ENCODE measurements at regions of chr1 and their contacts with region 1.

Region 1: DNA sequence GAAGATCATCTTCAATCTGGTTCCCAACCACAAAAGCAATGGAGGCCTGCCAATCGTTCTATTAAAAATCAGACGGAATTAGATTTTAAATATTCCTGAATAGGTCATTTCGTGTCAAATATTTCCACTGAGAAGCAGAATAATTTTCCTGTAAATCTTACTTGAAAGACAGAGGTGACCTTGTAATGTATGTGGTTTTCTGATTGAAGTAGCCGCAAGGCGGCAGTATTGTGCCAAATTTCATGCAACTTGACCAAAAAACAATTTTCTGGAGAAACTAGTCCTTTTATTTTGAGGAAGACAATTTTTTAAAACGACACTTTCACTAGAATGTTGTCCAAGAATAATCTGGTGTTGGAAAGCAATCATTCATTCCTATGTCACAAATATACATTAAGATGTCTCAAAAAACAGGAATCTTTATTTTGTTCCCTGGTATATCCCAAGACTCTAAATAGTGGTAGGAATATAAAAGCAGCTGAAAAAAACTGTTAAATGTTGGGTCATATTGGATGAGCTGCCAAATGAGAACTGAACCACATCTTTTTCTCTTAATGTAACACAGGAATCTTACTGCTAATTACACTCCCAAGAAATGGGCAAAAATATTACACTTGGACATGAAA is 33.6 kb downstream of the SPAG17 start:
- DNase-seq: no peak
- H3K4me3 ChIP-seq: no peak overlapping the region
- H3K27ac ChIP-seq: no peak overlapping the region
- H3K4me1 ChIP-seq: no peaks in the 10 kb centered on the region
- H3K27me3 ChIP-seq: no peaks in the 10 kb centered on the region
- CTCF ChIP-seq: peak; percentile 54 to 68 (median 67)
- EP300 ChIP-seq: no peak
- POLR2A ChIP-seq: no peak

Region 2: DNA sequence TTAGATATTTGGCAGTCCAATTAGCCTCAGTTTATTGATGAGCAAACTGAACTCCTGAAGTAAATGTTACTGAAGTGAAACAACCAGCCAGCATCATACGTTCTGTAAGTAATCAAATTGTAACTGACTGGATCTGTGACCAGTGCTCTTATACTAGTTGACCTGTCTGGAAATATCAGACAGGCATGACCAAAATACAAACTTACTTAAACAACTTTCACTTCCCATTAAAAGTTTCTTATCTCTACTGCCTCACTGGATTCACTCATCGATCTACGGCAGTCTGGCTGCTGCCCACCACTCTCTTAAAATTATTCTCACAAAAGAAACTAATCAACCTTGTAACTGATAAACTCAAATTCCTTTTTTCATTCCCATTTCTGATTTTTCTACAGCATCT is 165.5 kb before region 1 on chr1:
- intact Hi-C with region 1: no loop called
- DNase-seq: no peak
- H3K4me3 ChIP-seq: no peak overlapping the region
- H3K27ac ChIP-seq: no peak overlapping the region
- H3K4me1 ChIP-seq: no peaks in the 10 kb centered on the region
- H3K27me3 ChIP-seq: no peaks in the 10 kb centered on the region
- CTCF ChIP-seq: no peak
- EP300 ChIP-seq: no peak
- POLR2A ChIP-seq: no peak

Region 3: DNA sequence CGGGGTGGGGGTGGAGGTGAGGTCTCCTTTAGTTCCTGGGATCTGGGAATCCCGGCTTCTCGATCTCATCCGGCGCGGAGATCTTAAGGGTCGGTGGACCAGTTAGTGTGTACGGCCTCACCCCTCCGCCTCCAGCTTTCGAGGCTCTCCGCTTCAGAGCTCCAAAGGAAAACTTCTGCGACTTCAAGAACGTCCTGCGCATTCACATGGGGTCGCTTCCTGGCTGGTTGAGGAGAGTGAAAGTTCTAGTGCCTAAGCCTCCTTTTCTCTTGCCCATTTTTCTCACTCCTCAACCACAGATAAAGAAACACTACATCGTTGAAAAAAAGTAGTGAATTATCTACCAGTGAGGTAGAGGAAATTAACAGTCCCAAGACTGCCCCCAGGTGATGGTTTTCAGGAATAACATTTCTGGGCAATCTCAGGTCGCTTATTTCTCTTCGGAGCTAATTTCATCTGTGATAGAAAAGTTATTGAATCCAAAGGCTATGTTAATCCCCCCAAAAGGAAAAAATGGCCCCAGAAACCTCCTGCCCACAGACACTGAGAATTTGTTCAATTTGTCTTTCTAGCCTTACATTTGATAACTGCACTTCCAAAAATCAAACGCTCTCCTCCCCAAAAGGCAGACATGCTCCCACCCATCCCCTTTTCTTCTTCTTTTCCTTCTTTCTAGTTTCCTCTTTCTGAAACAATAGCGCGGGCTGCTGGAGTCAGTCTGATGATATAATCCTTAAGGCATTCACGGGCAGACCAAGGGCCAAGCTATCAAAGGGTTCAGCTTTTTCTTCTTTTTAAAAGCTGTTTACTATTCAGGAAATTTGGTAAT is 857.3 kb after region 1 on chr1:
- intact Hi-C with region 1: loop called (anchors 5 kb)
- DNase-seq: no peak
- H3K4me3 ChIP-seq: peak overlapping the region; percentile 39 to 52 (median 44)
- H3K27ac ChIP-seq: no peak overlapping the region
- H3K4me1 ChIP-seq: peaks cover 21 to 35% (median 33%) of the 10 kb centered on the region in 4 donors
- H3K27me3 ChIP-seq: peaks cover 0 to 62% (median 35%) of the 10 kb centered on the region in 4 donors
- CTCF ChIP-seq: peak; percentile 58 to 72 (median 61)
- EP300 ChIP-seq: no peak
- POLR2A ChIP-seq: no peak

Region 4: GRCh38 chr1:119367427-119368124 is 1216.2 kb after region 1 on chr1:
- intact Hi-C with region 1: loop called (anchors 10 kb)
- DNase-seq: no peak
- H3K4me3 ChIP-seq: no peak overlapping the region
- H3K27ac ChIP-seq: no peak overlapping the region
- H3K4me1 ChIP-seq: no peaks in the 10 kb centered on the region
- H3K27me3 ChIP-seq: no peaks in the 10 kb centered on the region
- CTCF ChIP-seq: peak; percentile 51 to 69 (median 56)
- EP300 ChIP-seq: no peak
- POLR2A ChIP-seq: no peak